ENCODE measurements at regions of chr15 and their contacts with region 1.

Region 1: DNA sequence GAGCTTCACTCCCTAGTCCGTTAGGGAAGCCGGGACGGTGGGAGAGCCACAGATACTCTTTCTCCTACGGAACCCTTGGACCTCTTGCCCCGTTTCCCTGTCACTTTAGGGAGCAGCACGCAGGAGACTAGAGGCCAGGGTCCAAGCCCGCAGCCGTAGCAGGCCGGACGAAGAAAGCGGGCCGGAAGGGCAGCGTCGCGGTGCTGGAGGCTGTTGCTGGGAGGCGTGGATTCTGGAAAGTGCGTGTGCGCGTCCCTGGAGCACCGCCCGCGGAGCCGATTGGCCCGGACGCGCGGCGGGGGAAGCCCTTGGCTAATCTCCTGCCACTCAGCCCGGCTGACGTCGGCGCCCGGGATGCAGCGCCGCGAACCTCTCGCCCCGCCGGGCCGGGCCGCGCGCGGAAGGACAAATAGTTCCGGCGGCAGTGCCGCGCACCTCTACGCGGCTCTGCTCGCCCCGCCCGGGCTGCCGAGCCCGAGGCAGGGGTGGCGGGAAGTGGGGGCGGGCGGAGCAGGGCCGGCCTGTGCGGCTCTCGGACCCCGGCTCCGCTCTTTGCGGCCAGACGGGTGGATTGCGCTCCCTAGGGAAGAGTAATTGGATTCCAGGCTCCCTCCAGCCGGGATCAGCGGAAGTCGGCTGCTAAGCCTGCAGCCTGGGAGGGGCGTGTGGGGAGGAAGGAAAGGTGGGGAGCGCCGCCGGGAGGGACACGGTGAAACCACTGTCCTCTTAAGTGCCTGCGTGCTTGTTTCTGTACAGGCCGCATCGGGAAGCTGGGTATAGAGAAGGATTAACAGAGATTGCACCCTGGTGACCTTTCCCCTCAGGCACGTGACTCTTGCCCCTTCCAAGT is 31.3 kb upstream of the TCF12 start:
- DNase-seq: peak; percentile 89
- H3K4me3 ChIP-seq: peak overlapping the region; percentile 70
- H3K27ac ChIP-seq: peak overlapping the region; percentile 95
- H3K27me3 ChIP-seq: no peaks in the 10 kb centered on the region
- CTCF ChIP-seq: peak; percentile 18; the same call in 1 of the 2 replicates

Region 2: DNA sequence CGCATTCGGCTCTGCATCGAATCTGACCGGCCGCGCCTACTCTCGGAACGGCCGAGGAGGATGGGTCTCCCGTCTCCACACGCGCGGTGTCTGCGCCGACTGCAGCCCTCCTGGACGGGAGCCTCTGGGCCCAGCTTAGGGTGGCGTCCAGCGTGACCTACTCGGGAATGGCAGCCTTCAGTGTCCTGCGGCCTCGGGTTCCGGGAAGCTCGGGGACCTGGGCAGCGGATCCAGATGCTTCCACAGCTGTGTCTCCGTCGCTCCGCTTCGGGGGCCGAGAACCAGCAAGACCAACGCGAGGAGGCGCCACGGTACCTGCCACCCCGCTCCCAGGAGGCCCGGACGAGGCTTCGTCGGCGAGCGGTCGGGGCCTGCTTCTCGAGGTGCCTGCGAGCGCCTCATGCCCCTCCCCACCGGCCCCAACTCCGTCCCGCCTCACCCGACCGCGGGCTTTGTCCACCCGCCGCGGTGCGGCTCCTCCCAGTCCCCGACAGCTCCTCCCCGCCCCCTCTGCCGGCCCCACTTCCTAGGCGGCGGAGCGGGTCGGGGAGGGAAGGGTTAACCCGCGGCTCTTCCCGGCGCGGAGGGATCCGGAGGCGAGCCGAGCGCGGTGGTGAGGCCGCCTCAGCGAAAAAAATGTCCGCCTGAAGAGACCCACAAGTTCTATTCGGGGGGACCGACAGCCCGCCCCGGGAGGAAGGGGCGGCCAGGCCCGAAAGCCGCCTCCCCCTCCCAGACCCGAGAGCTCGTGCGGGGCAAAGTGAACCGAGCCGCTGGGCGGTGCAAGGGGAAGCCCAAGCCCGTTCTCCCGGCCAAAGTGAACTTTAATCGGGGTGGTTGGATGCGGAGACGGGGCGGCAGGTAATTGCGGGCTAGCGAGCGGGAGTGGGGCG is 31.1 kb after region 1 on chr15 and contains the start of gene TCF12:
- CTCF ChIA-PET with region 1: no interaction called
- POLR2A ChIA-PET with region 1: interaction called, 27 read pairs
- DNase-seq: peak; percentile 95
- H3K4me3 ChIP-seq: peak within 1 kb of the TSS; percentile 87
- H3K27ac ChIP-seq: peak within 1 kb of the TSS; percentile 93
- H3K27me3 ChIP-seq: no peaks in the 10 kb centered on the region
- CTCF ChIP-seq: peak; percentile 51
- polyA plus RNA-seq, gene TCF12: 410 and 447 TPM in 2 replicates

Measured in AG04450 (cell line).